Posterior vena cava (tissue), 2 donors: ENCODE measurements at regions of chr2 and their contacts with region 1.

Region 1: DNA sequence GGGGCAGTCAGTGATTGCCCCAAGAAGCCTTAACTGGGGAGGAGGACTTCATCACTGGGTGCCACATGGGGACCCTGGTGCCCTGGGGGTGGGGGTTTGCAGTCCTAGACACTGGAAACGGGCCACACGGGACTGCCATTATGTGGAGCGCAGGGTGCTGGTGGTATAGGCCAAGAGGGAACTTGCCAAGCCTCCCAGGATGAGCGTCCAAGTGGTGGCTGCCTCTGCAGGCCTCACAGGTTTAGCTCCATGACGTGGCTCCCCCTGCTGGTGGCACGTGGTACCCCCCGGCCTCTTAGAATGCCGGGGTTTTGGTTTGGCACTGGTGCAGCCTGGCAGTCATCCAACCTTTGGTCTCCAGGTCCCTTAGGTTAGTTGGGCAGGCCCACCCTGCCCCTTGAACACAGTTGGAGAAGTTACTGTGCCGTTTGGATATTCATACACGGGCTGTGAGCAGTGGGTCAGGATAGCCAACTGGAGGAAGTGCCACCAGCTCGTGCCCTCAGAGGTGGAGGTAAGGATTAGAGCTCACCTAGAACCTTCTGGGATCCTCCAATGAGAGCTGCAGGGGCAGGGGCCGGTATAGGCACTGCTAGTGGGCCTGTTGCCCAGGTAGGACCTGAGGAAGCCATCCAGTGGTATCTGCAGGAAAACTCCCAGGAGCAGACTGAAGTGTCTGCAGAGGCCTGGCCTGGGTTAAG is 5.6 kb downstream of the PTMA start:
- DNase-seq: peak; percentile 97

Region 2: GRCh38 chr2:231674587-231675338 is 39.1 kb before region 1 on chr2:
- intact Hi-C with region 1: loop called (anchors 1 to 2 kb)
- DNase-seq: peak; percentile 91

Region 3: GRCh38 chr2:231965102-231965501 is 251.2 kb after region 1 on chr2:
- intact Hi-C with region 1: no loop called
- DNase-seq: no peak

Region 4: GRCh38 chr2:232203936-232204335 is 490.1 kb after region 1 on chr2:
- intact Hi-C with region 1: no loop called
- DNase-seq: no peak